Right ventricle myocardium inferior (tissue), 1 donor: ENCODE measurements at regions of chr3 and their contacts with region 1.

Region 1: GRCh38 chr3:57227204-57227929 is at the start of gene APPL1:
- DNase-seq: peak; percentile 96
- ATAC-seq: peak; percentile 99
- total RNA-seq, gene APPL1: 43.6 TPM

Region 2: DNA sequence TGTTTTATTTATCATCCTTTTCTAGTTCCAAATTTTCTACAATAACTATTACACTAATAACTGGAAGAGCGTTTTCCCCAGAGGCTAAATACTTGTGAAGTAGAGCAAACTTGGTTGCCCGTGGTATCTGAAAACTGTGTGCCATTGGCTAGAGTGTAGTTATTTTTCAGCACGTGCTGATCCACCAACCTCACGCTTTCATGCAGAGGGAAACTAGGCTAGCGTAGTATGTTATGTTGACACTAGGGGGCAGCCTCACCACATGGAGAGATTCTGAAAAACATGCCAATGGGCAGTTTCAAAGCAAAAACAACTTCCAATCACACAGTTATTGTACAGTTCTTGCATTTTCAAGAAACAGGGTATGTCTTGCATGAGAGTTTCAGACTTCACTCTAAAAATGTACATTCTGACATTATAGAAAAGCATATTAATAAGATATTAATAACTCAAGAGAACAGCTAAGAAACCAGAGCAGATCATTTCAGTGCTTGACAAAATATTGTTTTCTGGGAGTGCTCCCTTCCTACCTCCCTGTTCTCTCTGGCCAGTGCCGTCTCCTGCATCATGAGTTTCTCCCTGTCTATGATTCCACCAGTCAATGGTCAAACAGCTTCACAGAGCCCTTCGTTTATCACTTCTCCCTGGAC is 127.2 kb before region 1 on chr3:
- intact Hi-C with region 1: loop called (anchors 2 kb)
- DNase-seq: no peak
- ATAC-seq: peak; percentile 65

Region 3: GRCh38 chr3:57169872-57170623 is 57.3 kb before region 1 on chr3:
- intact Hi-C with region 1: loop called (anchors 2 kb)
- DNase-seq: peak; percentile 83
- ATAC-seq: peak; percentile 75

Region 4: GRCh38 chr3:57755668-57756527 is 528.5 kb after region 1 on chr3 and contains the start of gene SLMAP:
- intact Hi-C with region 1: loop called (anchors 5 kb)
- DNase-seq: peak; percentile 99
- ATAC-seq: peak; percentile 99
- total RNA-seq, gene SLMAP: 294 TPM